Right ventricle myocardium inferior (tissue), 1 donor: ENCODE measurements at regions of chr18 and their contacts with region 1.

Region 1: DNA sequence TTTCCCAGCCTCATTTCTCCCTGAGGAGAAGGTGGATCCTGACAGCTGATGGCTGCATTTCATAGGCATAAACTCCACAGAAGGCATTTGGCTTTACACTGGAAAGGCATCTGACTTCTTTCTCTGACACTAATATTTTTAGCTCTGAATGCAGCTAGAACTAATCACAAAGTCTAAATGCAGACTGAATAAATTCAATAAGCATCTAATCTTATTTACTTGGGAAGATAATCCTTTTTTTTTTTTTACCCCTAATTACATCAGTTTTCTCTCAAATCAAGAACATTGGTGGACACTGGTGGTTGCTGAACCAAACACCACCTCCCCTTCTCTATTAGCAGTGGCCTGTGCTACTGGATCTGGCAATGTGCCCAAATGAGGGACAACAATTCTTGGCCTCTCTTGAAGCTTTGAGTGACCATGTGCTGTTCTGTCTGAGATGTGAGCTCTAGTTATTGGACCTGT is 50.9 kb upstream of the CD226 start:
- DNase-seq: no peak
- ATAC-seq: peak; percentile 87

Region 2: DNA sequence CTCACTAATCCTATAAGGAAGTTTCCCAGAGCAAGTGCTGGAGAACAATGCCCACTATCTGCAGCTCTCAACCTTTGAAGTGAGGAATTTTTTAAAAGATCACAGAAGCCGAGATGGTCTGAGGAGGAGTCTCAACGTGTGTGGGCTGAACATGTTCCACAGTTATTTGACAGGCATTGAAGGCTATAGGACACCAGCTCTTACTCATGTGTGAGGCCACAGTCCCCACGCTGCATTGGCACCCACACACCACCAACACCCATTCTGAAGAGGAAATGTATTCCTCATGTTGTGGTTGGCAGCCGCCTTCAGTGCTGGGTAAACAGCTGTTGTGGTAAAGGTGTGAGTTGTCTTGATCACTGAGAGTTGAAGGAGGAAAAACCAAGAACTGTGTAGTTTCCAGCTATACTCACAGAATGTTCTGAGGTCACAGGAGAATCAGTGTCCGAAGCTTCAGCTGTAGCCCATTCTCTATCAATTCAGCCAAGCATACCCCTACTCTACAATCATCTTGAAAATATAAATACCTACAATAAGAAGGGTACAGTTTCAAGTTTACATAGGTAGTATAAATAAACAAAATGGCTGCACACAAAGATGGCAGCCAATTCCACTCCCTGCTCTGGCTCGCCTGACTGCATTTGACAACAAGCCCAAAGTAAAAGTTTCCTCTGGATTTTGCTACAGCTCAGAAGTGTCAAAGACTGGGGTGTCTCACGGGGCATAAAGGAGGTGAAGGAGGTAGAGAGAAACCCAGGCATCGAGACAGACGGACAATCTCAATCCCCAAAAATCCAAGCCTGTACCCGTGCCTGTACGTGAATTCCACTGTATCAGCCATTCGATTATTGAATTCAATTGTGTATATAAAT is 63.0 kb before region 1 on chr18:
- intact Hi-C with region 1: loop called (anchors 5 kb)
- DNase-seq: peak; percentile 69
- ATAC-seq: no peak

Region 3: GRCh38 chr18:70349316-70349715 is 350.8 kb after region 1 on chr18:
- intact Hi-C with region 1: no loop called
- DNase-seq: no peak
- ATAC-seq: no peak